ENCODE measurements at regions of chr18 and their contacts with region 1.

Region 1: GRCh38 chr18:59200787-59201186 is 19.2 kb upstream of the GRP start:
- DNase-seq: no peak
- H3K4me3 ChIP-seq: no peak overlapping the region
- H3K27ac ChIP-seq: no peak overlapping the region
- H3K4me1 ChIP-seq: no peaks in the 10 kb centered on the region
- H3K27me3 ChIP-seq: no peaks in the 10 kb centered on the region
- CTCF ChIP-seq: no peak
- EP300 ChIP-seq: no peak
- POLR2A ChIP-seq: no peak

Region 2: DNA sequence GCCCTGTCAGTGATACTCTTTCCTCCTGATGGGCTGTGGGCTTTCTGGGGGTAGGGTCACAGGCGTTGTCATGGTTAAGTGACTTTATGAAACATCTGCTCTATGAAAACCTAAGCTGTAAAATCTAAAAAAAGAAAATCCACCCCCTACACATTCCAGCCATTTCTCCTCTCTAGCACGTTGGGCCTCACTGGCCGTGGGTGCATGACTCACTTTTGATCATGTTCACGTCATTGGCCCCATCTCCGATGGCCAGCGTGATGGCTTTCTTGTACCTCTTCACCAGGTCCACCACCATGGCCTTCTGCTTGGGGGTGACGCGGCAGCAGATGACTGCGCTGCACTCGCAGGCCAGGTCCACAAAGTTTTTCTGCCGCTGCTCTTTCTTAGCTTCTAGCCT is 1539.8 kb before region 1 on chr18:
- intact Hi-C with region 1: loop called in 1 of 4 experiments (anchors 5 kb)
- DNase-seq: no peak
- H3K4me3 ChIP-seq: no peak overlapping the region
- H3K27ac ChIP-seq: no peak overlapping the region
- H3K4me1 ChIP-seq: no peaks in the 10 kb centered on the region
- H3K27me3 ChIP-seq: no peaks in the 10 kb centered on the region
- CTCF ChIP-seq: no peak
- EP300 ChIP-seq: no peak
- POLR2A ChIP-seq: no peak

Region 3: DNA sequence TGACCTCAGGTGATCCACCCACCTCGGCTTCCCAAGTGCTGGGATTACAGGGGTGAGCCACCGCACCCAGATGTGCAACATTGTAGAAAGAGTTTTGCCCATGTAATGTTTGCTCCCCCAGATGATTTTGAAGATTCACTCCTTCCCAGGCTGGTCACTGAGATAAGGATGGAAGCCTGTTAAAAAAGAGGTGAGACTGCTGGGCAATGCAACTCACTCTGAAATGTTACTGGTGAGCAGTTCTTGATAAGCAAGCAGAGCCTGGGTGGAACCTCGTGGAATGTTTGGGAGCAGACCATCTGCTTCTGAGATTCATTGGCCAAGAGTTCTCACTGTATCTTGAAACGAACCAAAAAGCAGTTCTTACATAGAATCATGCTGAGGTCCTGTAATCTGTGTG is 38.9 kb after region 1 on chr18:
- intact Hi-C with region 1: no loop called
- DNase-seq: no peak
- H3K4me3 ChIP-seq: no peak overlapping the region
- H3K27ac ChIP-seq: no peak overlapping the region
- H3K4me1 ChIP-seq: no peaks in the 10 kb centered on the region
- H3K27me3 ChIP-seq: no peaks in the 10 kb centered on the region
- CTCF ChIP-seq: no peak
- EP300 ChIP-seq: no peak
- POLR2A ChIP-seq: no peak